Activated T-helper 1 cell treated with anti-CD3 and anti-CD28 coated beads, Interleukin-12 subunit alpha, Interleukin-12 subunit beta, Interleukin-2, Interleukin-4 antibody, amounts not matched to agents 30 ng/mL and 10 ng/mL and 1 ng/mL, durations not matched to agents 14 hours and 24 hours and 36 hours (primary cell): ENCODE measurements at regions of chr5 and their contacts with region 1.

Region 1: GRCh38 chr5:35617435-35618303 is at the start of gene SPEF2:
- DNase-seq: peak; percentile 71
- H3K4me3 Mint-ChIP-seq: peak within 1 kb of the TSS; percentile 92
- H3K27ac Mint-ChIP-seq: peak within 1 kb of the TSS; percentile 94
- H3K4me1 Mint-ChIP-seq: peaks cover 53% of the 10 kb centered on the region
- H3K27me3 Mint-ChIP-seq: no peaks in the 10 kb centered on the region
- total RNA-seq, gene SPEF2: 4.5 and 4.6 TPM in 2 replicates

Region 2: GRCh38 chr5:35478856-35479682 is 138.6 kb before region 1 on chr5:
- intact Hi-C with region 1: loop called (anchors 5 kb)
- DNase-seq: peak; percentile 1
- H3K4me3 Mint-ChIP-seq: peak overlapping the region; percentile 66
- H3K27ac Mint-ChIP-seq: peak overlapping the region; percentile 86
- H3K4me1 Mint-ChIP-seq: peaks cover 12% of the 10 kb centered on the region
- H3K27me3 Mint-ChIP-seq: no peaks in the 10 kb centered on the region

Region 3: DNA sequence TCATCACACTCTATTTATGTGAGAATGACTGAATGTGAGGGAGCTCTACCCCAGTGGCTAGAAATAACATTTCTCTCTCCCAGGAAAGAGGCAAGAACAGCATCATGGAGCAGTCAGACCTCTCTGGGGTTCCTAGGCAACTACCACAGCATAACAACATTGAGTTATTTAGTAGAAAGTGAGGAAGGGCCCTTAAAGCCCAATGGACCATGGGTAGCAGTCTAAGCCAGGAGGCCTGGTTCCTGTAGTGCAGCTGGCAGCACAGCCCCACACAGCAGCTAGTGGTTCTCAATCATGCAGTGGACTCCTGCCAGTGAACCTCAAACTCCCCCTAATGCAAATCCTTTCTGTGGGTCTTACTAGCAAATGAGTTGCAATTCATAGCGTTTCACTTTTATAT is 55.3 kb after region 1 on chr5:
- intact Hi-C with region 1: loop called (anchors 1 kb)
- DNase-seq: peak; percentile 29
- H3K4me3 Mint-ChIP-seq: peak overlapping the region; percentile 10
- H3K27ac Mint-ChIP-seq: peak overlapping the region; percentile 59
- H3K4me1 Mint-ChIP-seq: peaks cover 65% of the 10 kb centered on the region
- H3K27me3 Mint-ChIP-seq: no peaks in the 10 kb centered on the region

Region 4: GRCh38 chr5:35830587-35830986 is 212.9 kb after region 1 on chr5:
- intact Hi-C with region 1: loop called (anchors 5 kb)
- DNase-seq: no peak
- H3K4me3 Mint-ChIP-seq: peak overlapping the region; percentile 43
- H3K27ac Mint-ChIP-seq: peak overlapping the region; percentile 82
- H3K4me1 Mint-ChIP-seq: peaks cover 86% of the 10 kb centered on the region
- H3K27me3 Mint-ChIP-seq: no peaks in the 10 kb centered on the region

Region 5: DNA sequence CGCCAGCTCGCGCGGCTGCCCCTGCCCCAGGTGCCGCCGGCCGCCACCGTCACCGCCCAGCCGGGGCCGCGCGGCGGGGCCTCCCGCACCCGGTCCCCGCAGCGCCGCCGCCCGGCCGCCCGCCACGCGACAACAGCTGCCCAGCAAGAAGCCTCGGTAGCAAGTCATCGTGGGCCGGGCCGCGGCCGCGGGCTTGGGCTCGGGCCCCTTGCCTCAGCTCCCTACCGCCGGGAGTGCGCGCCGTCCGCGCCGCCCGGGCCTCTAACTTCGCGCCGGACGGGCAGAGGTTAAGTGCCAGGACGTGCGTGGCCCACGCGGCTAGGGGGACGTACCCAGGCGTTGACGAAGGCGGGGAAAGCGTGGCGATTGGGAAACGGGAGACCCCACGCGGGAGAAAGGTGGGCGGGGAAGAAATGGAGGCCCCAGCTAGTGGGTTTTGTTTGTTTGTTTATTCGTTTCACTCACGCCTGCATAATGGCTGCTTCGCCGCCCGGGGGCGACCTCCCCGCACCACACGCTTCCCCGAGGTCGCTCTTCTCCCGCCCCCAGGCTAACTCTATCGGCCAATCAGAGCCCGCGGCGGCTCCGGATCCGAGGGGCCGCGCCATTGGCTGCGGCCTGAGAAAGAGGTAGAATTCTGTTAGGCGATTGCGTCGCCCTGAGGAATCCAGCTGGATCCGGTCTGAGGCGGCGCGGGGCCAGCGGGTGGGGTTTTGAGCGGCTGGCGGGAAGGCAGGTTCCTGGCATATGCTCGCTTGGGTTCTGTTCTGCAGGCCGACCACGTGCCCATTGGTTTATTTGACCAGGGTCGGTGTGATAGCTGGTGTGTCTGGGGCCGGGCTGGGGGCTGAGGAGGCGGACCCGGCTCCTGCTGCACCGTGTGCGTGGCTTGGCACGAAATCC is 624.2 kb after region 1 on chr5 and contains the start of gene NADK2:
- intact Hi-C with region 1: loop called (anchors 5 kb)
- DNase-seq: peak; percentile 93
- H3K4me3 Mint-ChIP-seq: peak within 1 kb of the TSS; percentile 90
- H3K27ac Mint-ChIP-seq: peak within 1 kb of the TSS; percentile 96
- H3K4me1 Mint-ChIP-seq: peaks cover 39% of the 10 kb centered on the region
- H3K27me3 Mint-ChIP-seq: peaks cover 4% of the 10 kb centered on the region
- total RNA-seq, gene NADK2: 21.7 and 25.1 TPM in 2 replicates